ENCODE measurements at regions of chr2 and their contacts with region 1.

Region 1: GRCh38 chr2:7427293-7428060 is 510.3 kb downstream of the RNF144A start:
- DNase-seq: peak; percentile 4
- H3K4me3 ChIP-seq: no peak overlapping the region
- H3K27ac ChIP-seq: no peak overlapping the region
- H3K27me3 ChIP-seq: peaks cover 5% of the 10 kb centered on the region
- CTCF ChIP-seq: peak; percentile 71

Region 2: GRCh38 chr2:7440977-7441376 is 13.5 kb after region 1 on chr2:
- CTCF ChIA-PET with region 1: interaction called, 12 read pairs
- POLR2A ChIA-PET with region 1: no interaction called
- DNase-seq: no peak
- H3K4me3 ChIP-seq: no peak overlapping the region
- H3K27ac ChIP-seq: no peak overlapping the region
- H3K27me3 ChIP-seq: no peaks in the 10 kb centered on the region
- CTCF ChIP-seq: no peak

Measured in AG04450 (cell line).